Mammary epithelial cell (primary cell): ENCODE measurements at regions of chr2 and their contacts with region 1.

Region 1: GRCh38 chr2:64447317-64448040 is 6.5 kb upstream of the LGALSL start:
- DNase-seq: peak; percentile 83
- H3K4me3 ChIP-seq: no peak overlapping the region
- H3K27ac ChIP-seq: no peak overlapping the region
- H3K4me1 ChIP-seq: peaks cover 3% of the 10 kb centered on the region
- H3K27me3 ChIP-seq: no peaks in the 10 kb centered on the region
- CTCF ChIP-seq: no peak

Region 2: GRCh38 chr2:64396551-64396950 is 50.9 kb before region 1 on chr2:
- CTCF ChIA-PET with region 1: no interaction called
- dilution Hi-C with region 1: loop called (anchors 5 kb)
- in situ Hi-C with region 1: no loop called
- intact Hi-C with region 1: no loop called
- DNase-seq: no peak
- H3K4me3 ChIP-seq: no peak overlapping the region
- H3K27ac ChIP-seq: no peak overlapping the region
- H3K4me1 ChIP-seq: no peaks in the 10 kb centered on the region
- H3K27me3 ChIP-seq: no peaks in the 10 kb centered on the region
- CTCF ChIP-seq: no peak